ENCODE measurements at regions of chr4 and their contacts with region 1.

Region 1: DNA sequence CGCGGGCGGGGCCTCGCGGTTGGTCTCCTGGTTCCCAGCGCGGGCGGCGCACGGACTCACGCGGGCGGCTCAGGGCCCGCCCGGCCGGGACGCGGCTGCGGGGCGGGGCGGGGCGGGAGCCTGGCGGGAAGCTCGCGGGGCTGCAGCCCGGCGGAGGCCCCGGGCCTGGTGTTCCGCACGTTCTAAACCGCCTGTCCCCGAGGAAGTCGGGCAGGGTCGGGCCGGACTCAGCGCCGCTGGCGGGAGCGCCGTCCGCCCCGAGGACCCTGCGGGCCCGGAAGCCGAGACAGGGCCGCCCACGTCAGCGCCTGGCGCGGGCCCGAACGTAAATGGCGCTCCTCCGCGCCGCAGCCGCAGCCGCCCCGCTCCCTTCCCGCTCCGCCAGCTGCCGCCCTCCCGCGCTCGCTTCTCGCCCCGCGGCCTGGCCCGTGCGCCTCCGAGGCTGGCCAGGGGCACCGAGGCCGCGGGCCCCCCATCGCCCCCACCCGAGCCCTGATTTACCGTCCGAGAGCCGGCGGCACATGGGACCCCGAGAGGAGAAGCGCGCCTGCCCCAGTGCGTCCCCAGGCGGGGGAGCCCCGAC is 309 bp upstream of the CTBP1 start:
- DNase-seq: peak; percentile 75 to 91 (median 87)
- H3K4me3 ChIP-seq: peak overlapping the region; percentile 74
- H3K4me3 Mint-ChIP-seq: peak overlapping the region; percentile 87 to 96 (median 90)
- H3K27ac ChIP-seq: peak overlapping the region; percentile 89
- H3K27ac Mint-ChIP-seq: peak overlapping the region; percentile 92 to 99 (median 94)
- H3K4me1 ChIP-seq: peaks cover 69% of the 10 kb centered on the region
- H3K4me1 Mint-ChIP-seq: peaks cover 58 to 74% (median 63%) of the 10 kb centered on the region in 3 donors
- H3K27me3 ChIP-seq: no peaks in the 10 kb centered on the region
- H3K27me3 Mint-ChIP-seq: peaks cover 0 to 3% of the 10 kb centered on the region in 2 donors

Region 2: DNA sequence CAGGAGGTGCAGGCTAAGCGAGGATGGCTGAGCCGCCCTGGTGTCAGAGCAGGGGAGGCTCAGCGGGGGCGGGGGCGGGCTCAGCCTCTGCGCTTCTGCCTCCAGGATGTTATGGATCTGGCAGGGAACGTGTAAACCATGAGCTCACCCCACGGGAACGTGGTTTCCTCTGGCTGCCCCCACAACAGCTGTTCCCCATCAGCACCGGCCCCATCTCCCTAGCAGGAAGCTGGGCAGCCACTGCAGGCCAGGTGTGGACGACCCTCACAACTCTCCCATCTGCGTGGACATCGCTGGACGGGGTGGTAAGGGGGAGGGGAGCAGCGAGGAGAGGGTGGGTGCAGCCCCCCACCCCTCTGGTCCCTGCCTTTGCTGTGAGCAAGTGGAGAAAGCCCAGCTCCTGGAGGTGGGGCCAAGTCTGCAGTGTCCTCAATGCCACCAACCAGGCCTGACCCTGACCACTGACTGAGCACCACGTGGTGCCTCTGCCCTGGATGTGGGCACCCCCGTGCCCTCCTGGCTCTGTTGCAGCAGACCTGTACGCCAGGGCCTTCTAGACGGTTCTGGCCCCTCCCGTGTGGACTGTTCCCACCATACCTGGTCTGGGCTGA is 48.7 kb before region 1 on chr4:
- CTCF ChIA-PET with region 1: interaction called, 4 read pairs
- POLR2A ChIA-PET with region 1: interaction called, 16 read pairs
- DNase-seq: peak in 4 of 5 donors; percentile 18 to 54 (median 32)
- H3K4me3 ChIP-seq: peak overlapping the region; percentile 59
- H3K4me3 Mint-ChIP-seq: peak overlapping the region; percentile 64 to 98 (median 89)
- H3K27ac ChIP-seq: peak overlapping the region; percentile 81
- H3K27ac Mint-ChIP-seq: peak overlapping the region; percentile 92 to 100 (median 97)
- H3K4me1 ChIP-seq: peaks cover 55% of the 10 kb centered on the region
- H3K4me1 Mint-ChIP-seq: peaks cover 58 to 86% (median 66%) of the 10 kb centered on the region in 3 donors
- H3K27me3 ChIP-seq: no peaks in the 10 kb centered on the region
- H3K27me3 Mint-ChIP-seq: no peaks in the 10 kb centered on the region

Region 3: GRCh38 chr4:1266881-1267763 is 17.9 kb after region 1 on chr4:
- CTCF ChIA-PET with region 1: interaction called, 47 read pairs
- POLR2A ChIA-PET with region 1: interaction called, 13 read pairs
- DNase-seq: peak in 2 of 5 donors; percentile 17 to 64
- H3K4me3 ChIP-seq: peak overlapping the region; percentile 58
- H3K4me3 Mint-ChIP-seq: peak overlapping the region; percentile 77 to 95 (median 83)
- H3K27ac ChIP-seq: peak overlapping the region; percentile 59
- H3K27ac Mint-ChIP-seq: peak overlapping the region; percentile 92 to 98 (median 95)
- H3K4me1 ChIP-seq: peaks cover 8% of the 10 kb centered on the region
- H3K4me1 Mint-ChIP-seq: peaks cover 10 to 15% (median 11%) of the 10 kb centered on the region in 3 donors
- H3K27me3 ChIP-seq: no peaks in the 10 kb centered on the region
- H3K27me3 Mint-ChIP-seq: peaks cover 0 to 2% of the 10 kb centered on the region in 2 donors

Region 4: GRCh38 chr4:1289207-1290164 is 40.2 kb after region 1 on chr4 and contains the start of gene MAEA:
- CTCF ChIA-PET with region 1: no interaction called
- POLR2A ChIA-PET with region 1: interaction called, 15 read pairs
- DNase-seq: peak; percentile 94 to 98 (median 96)
- H3K4me3 ChIP-seq: peak within 1 kb of the TSS; percentile 88
- H3K4me3 Mint-ChIP-seq: peak within 1 kb of the TSS; percentile 89 to 99 (median 92)
- H3K27ac ChIP-seq: peak within 1 kb of the TSS; percentile 80
- H3K27ac Mint-ChIP-seq: peak within 1 kb of the TSS; percentile 91 to 98 (median 96)
- H3K4me1 ChIP-seq: peaks cover 39% of the 10 kb centered on the region
- H3K4me1 Mint-ChIP-seq: peaks cover 31 to 47% (median 42%) of the 10 kb centered on the region in 3 donors
- H3K27me3 ChIP-seq: no peaks in the 10 kb centered on the region
- H3K27me3 Mint-ChIP-seq: peaks cover 0 to 4% of the 10 kb centered on the region in 2 donors
- total RNA-seq, gene MAEA: 59.4 to 63.8 TPM

Measured in CD8-positive, alpha-beta memory T cell (primary cell).